OCI-LY7 (cell line): ENCODE measurements at regions of chr7 and their contacts with region 1.

Region 1: DNA sequence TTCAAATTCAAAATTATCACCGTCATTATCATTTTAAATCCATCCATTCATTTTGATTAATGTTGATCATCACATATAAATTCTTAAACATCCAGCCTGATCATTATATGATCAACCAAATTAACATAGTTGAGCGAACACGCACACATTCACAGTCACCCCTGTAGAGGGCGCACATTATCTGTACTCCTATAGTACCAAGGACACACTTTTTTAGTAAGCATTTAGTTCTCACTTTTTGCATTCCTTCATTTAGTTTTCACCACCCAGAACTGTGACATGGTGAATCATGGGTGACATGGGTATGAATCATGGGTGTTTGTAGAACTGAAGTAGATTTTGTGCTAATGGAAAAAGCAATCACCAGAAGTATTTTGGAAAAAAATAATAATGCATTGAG is 26.0 kb upstream of the ZNF735 start:
- DNase-seq: peak; percentile 59
- H3K4me3 ChIP-seq: no peak overlapping the region
- H3K27ac ChIP-seq: no peak overlapping the region
- H3K4me1 ChIP-seq: no peaks in the 10 kb centered on the region
- CTCF ChIP-seq: peak; percentile 88

Region 2: DNA sequence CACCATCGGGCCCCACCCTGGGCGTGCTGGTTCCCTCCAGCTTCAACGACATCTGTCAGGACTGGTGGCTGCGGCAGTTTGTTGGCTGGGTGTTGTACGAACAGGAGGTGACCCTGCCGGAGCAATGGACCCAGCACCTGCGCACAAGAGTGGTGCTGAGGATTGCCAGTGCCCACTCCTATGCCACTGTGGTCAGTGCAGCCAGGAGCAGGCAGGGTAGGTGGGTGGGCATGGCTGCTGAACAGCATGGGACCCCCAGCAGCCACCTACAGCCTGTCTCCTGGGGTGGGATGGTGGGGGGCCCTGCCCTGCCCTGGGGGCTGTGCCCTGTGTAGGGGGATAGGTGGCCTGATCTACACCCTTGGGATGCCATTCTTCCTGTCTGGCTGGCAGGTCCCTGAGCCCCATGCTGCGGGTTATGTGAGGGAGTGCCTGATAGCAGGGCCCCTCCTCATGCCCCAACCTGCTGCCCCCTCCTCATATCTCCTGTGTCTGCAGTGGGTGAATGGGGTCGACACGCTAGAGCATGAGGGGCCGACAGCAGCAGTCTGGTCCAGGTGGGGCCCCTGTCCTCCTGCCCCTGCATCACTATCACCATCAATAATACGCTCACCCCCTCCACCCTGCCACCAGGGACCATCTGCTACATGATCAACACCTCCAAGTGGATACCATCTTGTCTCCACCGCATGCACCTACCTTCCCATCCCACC is 78.9 kb before region 1 on chr7:
- CTCF ChIA-PET with region 1: no interaction called
- POLR2A ChIA-PET with region 1: no interaction called
- intact Hi-C with region 1: no loop called
- DNase-seq: no peak
- H3K4me3 ChIP-seq: no peak overlapping the region
- H3K27ac ChIP-seq: no peak overlapping the region
- H3K4me1 ChIP-seq: no peaks in the 10 kb centered on the region
- CTCF ChIP-seq: no peak

Region 3: GRCh38 chr7:64300641-64301040 is 119.7 kb after region 1 on chr7:
- CTCF ChIA-PET with region 1: no interaction called
- POLR2A ChIA-PET with region 1: no interaction called
- intact Hi-C with region 1: no loop called
- DNase-seq: no peak
- H3K4me3 ChIP-seq: no peak overlapping the region
- H3K27ac ChIP-seq: no peak overlapping the region
- H3K4me1 ChIP-seq: peaks cover 15% of the 10 kb centered on the region
- CTCF ChIP-seq: no peak

Region 4: DNA sequence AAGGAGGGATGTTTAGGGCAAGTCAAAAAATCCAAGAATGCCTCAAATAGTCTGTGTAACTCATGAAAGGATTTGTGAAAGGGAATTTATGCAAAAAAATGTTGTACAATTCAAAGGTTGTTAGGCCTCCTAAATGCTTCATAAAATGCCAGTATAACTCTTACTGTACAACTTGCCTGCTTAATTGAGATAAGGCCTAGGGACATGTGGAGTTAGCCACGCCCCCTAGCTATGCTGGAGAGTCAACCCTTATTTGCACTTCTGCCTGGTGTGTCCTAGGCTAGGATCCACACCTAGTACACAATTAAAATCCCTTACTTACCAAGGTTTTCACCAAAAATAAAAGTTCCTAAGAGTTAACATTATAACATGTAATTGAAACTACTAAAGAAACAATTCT is 304.6 kb after region 1 on chr7:
- CTCF ChIA-PET with region 1: no interaction called
- POLR2A ChIA-PET with region 1: no interaction called
- intact Hi-C with region 1: loop called (anchors 2 kb)
- DNase-seq: no peak
- H3K4me3 ChIP-seq: no peak overlapping the region
- H3K27ac ChIP-seq: no peak overlapping the region
- H3K4me1 ChIP-seq: no peaks in the 10 kb centered on the region
- CTCF ChIP-seq: no peak